ENCODE measurements at regions of chrX and their contacts with region 1.

Region 1: GRCh38 chrX:15564981-15565579 is 35.7 kb downstream of the ACE2 start:
- DNase-seq: peak; percentile 70 to 84 (median 73)
- ATAC-seq: peak; percentile 91 to 96
- H3K4me3 ChIP-seq: no peak overlapping the region
- H3K27ac ChIP-seq: no peak overlapping the region
- H3K4me1 ChIP-seq: peaks cover 3% of the 10 kb centered on the region
- H3K27me3 ChIP-seq: no peaks in the 10 kb centered on the region

Region 2: GRCh38 chrX:15493118-15493962 is 71.7 kb before region 1 on chrX and contains the start of gene PIR:
- intact Hi-C with region 1: loop called in 3 of 4 experiments (anchors 2 to 10 kb)
- DNase-seq: peak; percentile 90 to 95 (median 94)
- ATAC-seq: peak; percentile 99 to 100
- H3K4me3 ChIP-seq: peak within 1 kb of the TSS; percentile 76
- H3K27ac ChIP-seq: peak within 1 kb of the TSS; percentile 87
- H3K4me1 ChIP-seq: no peaks in the 10 kb centered on the region
- H3K27me3 ChIP-seq: no peaks in the 10 kb centered on the region
- total RNA-seq, gene PIR: 13.4 to 18.7 (median 14.7) TPM

Measured in right cardiac atrium (tissue), 5 donors.